ENCODE measurements at regions of chr15 and their contacts with region 1.

Region 1: GRCh38 chr15:37015035-37015434 is 85.3 kb downstream of the MEIS2 start:
- DNase-seq: no peak
- ATAC-seq: peak; percentile 64

Region 2: GRCh38 chr15:35929740-35930444 is 1085.1 kb before region 1 on chr15:
- intact Hi-C with region 1: no loop called
- DNase-seq: no peak
- ATAC-seq: no peak

Region 3: GRCh38 chr15:37059086-37059485 is 44.1 kb after region 1 on chr15:
- intact Hi-C with region 1: loop called (anchors 5 kb)
- DNase-seq: no peak
- ATAC-seq: peak; percentile 43

Measured in Right ventricle myocardium inferior (tissue), 1 donor.